Panc1 (cell line): ENCODE measurements at regions of chr17 and their contacts with region 1.

Region 1: GRCh38 chr17:40209404-40210093 is 9.6 kb upstream of the WIPF2 start:
- DNase-seq: no peak
- ATAC-seq: no peak
- H3K4me3 ChIP-seq: no peak overlapping the region
- H3K27ac ChIP-seq: no peak overlapping the region
- H3K4me1 ChIP-seq: no peaks in the 10 kb centered on the region
- H3K27me3 ChIP-seq: no peaks in the 10 kb centered on the region
- CTCF ChIP-seq: no peak

Region 2: GRCh38 chr17:40174514-40174913 is 35.0 kb before region 1 on chr17:
- CTCF ChIA-PET with region 1: interaction called, 14 read pairs
- POLR2A ChIA-PET with region 1: no interaction called
- in situ Hi-C with region 1: no loop called
- intact Hi-C with region 1: no loop called
- DNase-seq: no peak
- ATAC-seq: no peak
- H3K4me3 ChIP-seq: no peak overlapping the region
- H3K27ac ChIP-seq: no peak overlapping the region
- H3K4me1 ChIP-seq: peaks cover 3% of the 10 kb centered on the region
- H3K27me3 ChIP-seq: no peaks in the 10 kb centered on the region
- CTCF ChIP-seq: no peak

Region 3: GRCh38 chr17:40309031-40309948 is 99.7 kb after region 1 on chr17 and contains the start of gene RARA:
- CTCF ChIA-PET with region 1: no interaction called
- POLR2A ChIA-PET with region 1: no interaction called
- in situ Hi-C with region 1: no loop called
- intact Hi-C with region 1: no loop called
- DNase-seq: no peak
- ATAC-seq: peak; percentile 75
- H3K4me3 ChIP-seq: peak within 1 kb of the TSS; percentile 70 to 81
- H3K27ac ChIP-seq: peak within 1 kb of the TSS; percentile 95
- H3K4me1 ChIP-seq: peaks cover 88% of the 10 kb centered on the region
- H3K27me3 ChIP-seq: no peaks in the 10 kb centered on the region
- CTCF ChIP-seq: no peak
- total RNA-seq, gene RARA: 55.6 TPM